ENCODE measurements at regions of chr1 and their contacts with region 1.

Region 1: DNA sequence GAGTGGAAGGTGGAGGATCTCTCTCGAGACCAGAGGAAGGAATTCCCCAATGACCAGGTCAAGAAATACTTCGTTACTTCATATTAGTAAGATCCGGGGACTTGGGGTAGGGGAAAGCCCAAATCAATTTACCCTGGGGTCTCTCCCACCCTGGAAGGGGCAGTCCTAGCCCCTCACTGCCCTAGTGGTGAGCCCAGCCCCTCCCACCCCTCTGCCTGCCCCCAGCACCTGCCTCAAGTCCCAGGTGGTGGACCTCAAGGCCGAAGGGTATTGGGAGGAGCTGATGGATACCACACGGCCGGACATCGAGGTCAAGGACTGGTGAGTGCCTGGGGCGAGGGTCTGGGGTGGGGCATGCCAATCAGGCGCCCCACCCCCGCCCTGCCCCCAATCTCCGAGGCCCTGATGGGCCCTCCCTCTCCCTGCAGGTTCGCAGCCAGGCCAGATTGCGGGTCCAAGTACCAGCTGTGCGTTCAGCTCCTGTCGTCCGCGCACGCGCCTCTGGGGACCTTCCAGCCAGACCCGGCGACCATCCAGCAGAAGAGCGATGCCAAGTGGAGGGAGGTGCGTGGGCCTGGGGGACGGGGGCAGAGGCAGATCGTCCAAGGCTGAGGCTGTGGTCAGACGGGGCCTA is 3.7 kb downstream of the FBXO44 start:
- DNase-seq: no peak
- ATAC-seq: no peak
- H3K4me3 ChIP-seq: no peak overlapping the region
- H3K4me3 Mint-ChIP-seq: no peak overlapping the region
- H3K27ac ChIP-seq: no peak overlapping the region
- H3K27ac Mint-ChIP-seq: no peak overlapping the region
- H3K4me1 ChIP-seq: peaks cover 8 to 23% of the 10 kb centered on the region in 2 experiments
- H3K4me1 Mint-ChIP-seq: peaks cover 7 to 13% (median 12%) of the 10 kb centered on the region in 3 donors
- H3K27me3 ChIP-seq: no peaks in the 10 kb centered on the region
- H3K27me3 Mint-ChIP-seq: no peaks in the 10 kb centered on the region

Region 2: GRCh38 chr1:11581451-11581991 is 76.9 kb before region 1 on chr1:
- CTCF ChIA-PET with region 1: no interaction called
- POLR2A ChIA-PET with region 1: no interaction called
- DNase-seq: no peak
- ATAC-seq: no peak
- H3K4me3 ChIP-seq: no peak overlapping the region
- H3K4me3 Mint-ChIP-seq: no peak overlapping the region
- H3K27ac ChIP-seq: no peak overlapping the region
- H3K27ac Mint-ChIP-seq: no peak overlapping the region
- H3K4me1 ChIP-seq: no peaks in the 10 kb centered on the region
- H3K4me1 Mint-ChIP-seq: no peaks in the 10 kb centered on the region
- H3K27me3 ChIP-seq: peaks cover 0 to 34% of the 10 kb centered on the region in 2 experiments
- H3K27me3 Mint-ChIP-seq: peaks cover 16 to 31% of the 10 kb centered on the region in 2 donors

Region 3: DNA sequence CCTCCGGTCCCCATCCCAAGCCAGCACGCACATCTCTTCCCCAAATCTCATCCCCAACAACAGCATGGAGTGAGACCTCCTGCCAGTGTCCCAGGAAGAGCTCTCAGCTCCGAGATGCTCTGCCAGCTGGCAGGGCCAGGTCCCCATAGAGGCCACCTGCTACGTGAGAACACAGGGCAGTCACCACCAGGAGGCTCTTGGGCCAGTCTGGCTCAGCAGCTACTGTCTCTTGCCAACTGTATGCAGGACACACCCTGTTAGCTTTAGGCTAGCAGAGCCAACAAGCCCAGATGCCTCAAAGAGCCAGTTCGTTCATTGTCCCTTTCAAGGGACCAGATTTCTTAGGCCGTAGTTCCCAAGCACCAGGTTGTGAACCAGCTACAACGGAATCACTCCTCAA is 41.1 kb before region 1 on chr1:
- CTCF ChIA-PET with region 1: no interaction called
- POLR2A ChIA-PET with region 1: no interaction called
- DNase-seq: no peak
- ATAC-seq: no peak
- H3K4me3 ChIP-seq: no peak overlapping the region
- H3K4me3 Mint-ChIP-seq: no peak overlapping the region
- H3K27ac ChIP-seq: no peak overlapping the region
- H3K27ac Mint-ChIP-seq: no peak overlapping the region
- H3K4me1 ChIP-seq: no peaks in the 10 kb centered on the region
- H3K4me1 Mint-ChIP-seq: no peaks in the 10 kb centered on the region
- H3K27me3 ChIP-seq: peaks cover 0 to 44% of the 10 kb centered on the region in 2 experiments
- H3K27me3 Mint-ChIP-seq: peaks cover 5 to 32% of the 10 kb centered on the region in 2 donors

Region 4: DNA sequence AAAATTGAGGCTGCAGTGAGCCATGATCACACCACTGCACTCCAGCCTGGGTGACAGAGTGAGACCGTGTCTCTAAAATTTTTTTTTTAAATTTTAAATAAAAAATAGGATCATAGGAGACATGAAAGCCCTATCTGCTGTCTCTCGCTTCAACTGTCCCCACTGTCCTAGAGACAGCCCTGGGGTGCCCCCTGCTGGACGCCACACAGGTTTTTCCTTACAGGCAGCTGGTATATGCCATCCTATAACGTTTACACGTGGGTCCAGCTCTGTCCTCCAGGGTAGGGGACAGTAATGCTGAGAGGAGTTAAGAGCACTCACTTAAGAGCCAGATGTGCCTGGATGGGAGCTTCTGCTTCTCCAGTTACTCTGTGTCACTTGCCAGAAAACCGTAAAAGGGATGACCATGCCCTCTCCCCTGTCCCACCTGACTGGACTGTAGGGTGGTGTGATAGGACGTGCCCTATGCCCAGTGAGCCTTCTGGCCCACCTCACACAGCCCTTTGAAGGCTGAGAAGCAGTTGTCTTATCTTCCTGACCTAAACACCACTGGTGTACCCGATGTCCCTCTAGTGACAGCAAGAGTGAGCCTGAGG is 12.7 kb before region 1 on chr1:
- CTCF ChIA-PET with region 1: interaction called, 3 to 12 read pairs
- POLR2A ChIA-PET with region 1: no interaction called
- DNase-seq: peak; percentile 54 to 85 (median 74)
- ATAC-seq: peak; percentile 43 to 59 (median 52)
- H3K4me3 ChIP-seq: no peak overlapping the region
- H3K4me3 Mint-ChIP-seq: no peak overlapping the region
- H3K27ac ChIP-seq: no peak overlapping the region
- H3K27ac Mint-ChIP-seq: no peak overlapping the region
- H3K4me1 ChIP-seq: peaks cover 2 to 22% of the 10 kb centered on the region in 2 experiments
- H3K4me1 Mint-ChIP-seq: peaks cover 11 to 20% (median 15%) of the 10 kb centered on the region in 3 donors
- H3K27me3 ChIP-seq: peaks cover 0 to 22% of the 10 kb centered on the region in 2 experiments
- H3K27me3 Mint-ChIP-seq: no peaks in the 10 kb centered on the region